ENCODE measurements at regions of chr9 and their contacts with region 1.

Region 1: GRCh38 chr9:3732077-3733038 is 206.6 kb upstream of the RFX3 start:
- DNase-seq: peak; percentile 32
- ATAC-seq: peak; percentile 100
- H3K4me3 Mint-ChIP-seq: no peak overlapping the region
- H3K27ac Mint-ChIP-seq: no peak overlapping the region
- H3K4me1 Mint-ChIP-seq: peaks cover 10% of the 10 kb centered on the region
- H3K27me3 Mint-ChIP-seq: no peaks in the 10 kb centered on the region
- CTCF ChIP-seq: peak; percentile 41

Region 2: GRCh38 chr9:3650994-3651622 is 81.2 kb before region 1 on chr9:
- CTCF ChIA-PET with region 1: no interaction called
- POLR2A ChIA-PET with region 1: no interaction called
- DNase-seq: no peak
- ATAC-seq: peak; percentile 55; the same call in 1 of the 2 replicates
- H3K4me3 Mint-ChIP-seq: no peak overlapping the region
- H3K27ac Mint-ChIP-seq: no peak overlapping the region; the same call in 1 of the 2 replicates
- H3K4me1 Mint-ChIP-seq: 0 out of 2 replicates have a peak, but pooled peaks cover 3% of the 10 kb centered on the region
- H3K27me3 Mint-ChIP-seq: no peaks in the 10 kb centered on the region
- CTCF ChIP-seq: no peak

Region 3: GRCh38 chr9:3828250-3828908 is 96.0 kb after region 1 on chr9:
- CTCF ChIA-PET with region 1: no interaction called
- POLR2A ChIA-PET with region 1: no interaction called
- DNase-seq: no peak
- ATAC-seq: no peak; the same call in 1 of the 2 replicates
- H3K4me3 Mint-ChIP-seq: no peak overlapping the region
- H3K27ac Mint-ChIP-seq: no peak overlapping the region
- H3K4me1 Mint-ChIP-seq: peaks cover 26% of the 10 kb centered on the region
- H3K27me3 Mint-ChIP-seq: no peaks in the 10 kb centered on the region
- CTCF ChIP-seq: no peak

Region 4: DNA sequence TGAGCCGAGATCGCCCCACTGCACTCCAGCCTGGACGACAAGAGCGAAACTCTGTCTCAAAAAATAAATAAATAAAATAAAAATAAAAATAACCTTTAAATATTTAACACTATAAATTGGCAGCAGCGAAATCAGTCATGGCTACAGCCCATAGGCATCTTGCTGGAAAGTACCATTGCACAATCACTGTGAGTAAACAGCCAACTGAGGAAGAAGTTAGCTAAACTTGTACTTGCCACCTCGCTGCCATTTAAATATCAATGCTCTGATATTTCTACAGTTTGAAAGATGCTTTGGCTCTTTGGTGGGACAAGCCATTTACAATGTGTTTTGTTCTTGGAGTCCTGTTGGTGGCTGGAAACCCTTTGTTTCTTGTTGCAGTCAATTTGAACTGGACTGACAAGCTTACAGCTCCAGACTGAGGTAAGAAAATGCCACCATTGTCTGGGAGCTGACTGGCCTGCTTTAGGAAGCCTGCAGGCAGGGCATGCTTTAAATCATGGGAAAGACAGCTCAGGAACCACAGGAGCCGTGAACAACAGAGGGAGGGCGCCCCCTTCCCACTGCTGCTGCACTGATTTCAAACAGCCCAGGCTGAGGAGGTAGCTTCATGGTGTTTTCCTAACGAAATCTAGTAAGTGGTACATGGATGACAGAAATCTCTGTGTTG is 116.2 kb after region 1 on chr9:
- CTCF ChIA-PET with region 1: interaction called, 36 read pairs
- POLR2A ChIA-PET with region 1: no interaction called
- DNase-seq: peak; percentile 68
- ATAC-seq: peak; percentile 99
- H3K4me3 Mint-ChIP-seq: no peak overlapping the region
- H3K27ac Mint-ChIP-seq: 0 out of 2 replicates have a peak overlapping the region, but pooled peaks have one; percentile 66
- H3K4me1 Mint-ChIP-seq: peaks cover 11% of the 10 kb centered on the region
- H3K27me3 Mint-ChIP-seq: no peaks in the 10 kb centered on the region
- CTCF ChIP-seq: no peak

Region 5: GRCh38 chr9:4117835-4118610 is 385.7 kb after region 1 on chr9:
- CTCF ChIA-PET with region 1: interaction called, 11 read pairs
- POLR2A ChIA-PET with region 1: no interaction called
- DNase-seq: peak; percentile 87
- ATAC-seq: peak; percentile 93
- H3K4me3 Mint-ChIP-seq: no peak overlapping the region
- H3K27ac Mint-ChIP-seq: no peak overlapping the region
- H3K4me1 Mint-ChIP-seq: 0 out of 2 replicates have a peak, but pooled peaks cover 3% of the 10 kb centered on the region
- H3K27me3 Mint-ChIP-seq: no peaks in the 10 kb centered on the region
- CTCF ChIP-seq: peak; percentile 68

Measured in WTC11 (cell line).